ENCODE measurements at regions of chr10 and their contacts with region 1.

Region 1: DNA sequence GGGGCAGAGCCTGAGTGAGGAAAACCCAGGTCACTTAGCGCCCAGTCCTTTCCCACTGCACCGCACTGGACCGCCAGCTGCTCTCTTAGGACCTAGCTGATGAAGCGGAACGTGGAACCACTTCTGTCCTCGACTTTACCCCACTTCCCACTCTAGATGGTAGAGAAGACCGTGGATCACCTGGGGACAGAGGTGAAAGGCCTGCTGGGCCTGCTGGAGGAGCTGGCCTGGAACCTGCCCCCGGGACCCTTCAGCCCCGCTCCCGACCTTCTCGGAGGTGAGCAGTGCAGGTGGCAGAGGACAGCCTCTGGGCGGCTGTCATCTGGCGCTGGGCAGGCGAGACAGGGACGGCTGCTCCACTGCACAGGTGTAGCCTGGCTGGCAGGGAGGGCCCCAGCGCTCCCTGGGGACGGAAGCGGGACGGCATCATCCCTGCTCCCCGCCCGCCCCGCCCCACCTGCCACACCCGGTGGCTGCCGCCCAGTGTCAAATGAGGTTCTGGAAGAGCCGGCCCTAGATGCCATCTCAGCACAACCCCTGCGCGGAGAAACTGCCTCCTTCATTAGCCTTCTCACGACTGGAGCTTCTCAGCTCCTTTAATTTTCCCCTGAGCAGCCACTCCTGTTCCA is 11.7 kb downstream of the PLAC9 start:
- DNase-seq: peak in 2 of 5 donors; percentile 22 to 48
- H3K4me3 ChIP-seq: peak overlapping the region; percentile 30 to 57
- H3K4me3 Mint-ChIP-seq: peak overlapping the region; percentile 81 to 90 (median 84)
- H3K27ac ChIP-seq: peak overlapping the region; percentile 40
- H3K27ac Mint-ChIP-seq: peak overlapping the region; percentile 59 to 97 (median 84)
- H3K4me1 ChIP-seq: peaks cover 17% of the 10 kb centered on the region
- H3K4me1 Mint-ChIP-seq: peaks cover 15 to 24% (median 19%) of the 10 kb centered on the region in 4 donors
- H3K27me3 ChIP-seq: no peaks in the 10 kb centered on the region
- H3K27me3 Mint-ChIP-seq: peaks cover 6 to 9% of the 10 kb centered on the region in 2 donors

Region 2: DNA sequence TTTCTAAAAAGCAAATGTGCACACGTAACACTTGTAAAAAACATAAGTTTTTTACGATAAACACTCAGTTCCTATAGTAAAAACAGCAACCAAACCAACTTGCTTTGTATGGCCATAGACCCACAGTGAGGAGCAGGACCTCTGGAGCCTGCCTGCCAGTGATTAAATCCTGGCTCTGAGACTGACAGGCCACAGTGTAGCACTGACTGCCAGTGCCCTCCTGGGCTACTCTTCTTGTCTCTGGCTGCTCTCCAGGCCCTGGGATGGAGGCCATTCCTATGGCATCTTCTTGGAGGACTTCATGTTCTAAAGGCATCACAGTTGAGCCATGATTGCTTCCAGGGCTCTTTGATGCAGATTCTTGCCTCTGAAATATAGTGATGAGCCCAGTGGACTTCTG is 88.4 kb before region 1 on chr10:
- CTCF ChIA-PET with region 1: interaction called, 8 read pairs
- POLR2A ChIA-PET with region 1: no interaction called
- intact Hi-C with region 1: loop called (anchors 1 kb)
- DNase-seq: no peak
- H3K4me3 ChIP-seq: no peak overlapping the region
- H3K4me3 Mint-ChIP-seq: no peak overlapping the region
- H3K27ac ChIP-seq: no peak overlapping the region
- H3K27ac Mint-ChIP-seq: peak overlapping the region in 1 of 7 donors; percentile 17
- H3K4me1 ChIP-seq: no peaks in the 10 kb centered on the region
- H3K4me1 Mint-ChIP-seq: peaks cover 0 to 10% (median 5%) of the 10 kb centered on the region in 4 donors
- H3K27me3 ChIP-seq: no peaks in the 10 kb centered on the region
- H3K27me3 Mint-ChIP-seq: peaks cover 0 to under 1% of the 10 kb centered on the region in 2 donors

Region 3: DNA sequence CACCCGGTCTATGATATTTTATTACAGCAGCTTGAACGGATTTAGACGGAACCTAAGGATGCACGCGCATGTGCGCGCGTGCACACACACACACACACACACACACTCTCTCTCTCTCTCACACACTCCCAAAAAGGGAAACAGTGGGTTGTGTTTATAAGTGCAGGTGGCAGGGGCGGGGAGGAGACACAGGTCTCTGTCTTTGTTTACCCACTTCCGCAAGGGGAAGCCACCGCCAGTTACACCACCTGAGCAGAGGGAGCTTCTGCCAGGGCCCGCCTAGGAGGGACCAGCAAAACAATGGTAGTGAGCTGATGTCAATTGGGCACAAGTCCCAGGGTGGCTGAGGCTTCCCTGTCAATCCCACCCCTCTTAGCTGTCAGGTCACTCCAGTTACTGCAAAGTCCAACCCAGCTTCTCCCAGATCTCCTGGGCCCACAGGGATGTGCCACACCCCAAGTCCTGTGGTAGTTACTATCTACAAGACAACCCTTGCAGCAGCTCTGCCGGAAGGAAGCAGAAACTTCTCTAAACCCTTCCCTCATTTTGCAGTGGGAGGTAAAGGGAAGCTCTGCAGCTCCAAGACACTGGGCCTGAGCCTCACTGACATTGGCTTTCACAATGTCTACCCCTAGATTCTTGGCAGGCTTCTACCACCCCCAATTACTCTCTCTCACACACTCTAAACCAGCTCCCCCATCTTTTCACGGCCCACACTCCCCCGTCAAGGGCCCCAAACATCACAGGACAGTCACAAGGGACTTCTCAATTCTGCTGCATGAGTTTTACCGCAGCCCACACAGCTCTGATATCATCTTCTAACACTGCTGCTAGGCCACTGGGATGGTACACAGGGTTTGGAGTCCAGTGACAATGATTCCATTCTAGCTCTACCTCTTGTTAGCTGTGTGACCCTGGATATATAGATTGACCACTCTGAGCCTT is 43.6 kb after region 1 on chr10:
- CTCF ChIA-PET with region 1: interaction called, 16 read pairs
- POLR2A ChIA-PET with region 1: interaction called, 42 read pairs
- intact Hi-C with region 1: loop called (anchors 1 kb)
- DNase-seq: peak; percentile 88 to 94 (median 93)
- H3K4me3 ChIP-seq: peak overlapping the region; percentile 18 to 24
- H3K4me3 Mint-ChIP-seq: peak overlapping the region; percentile 78 to 92 (median 82)
- H3K27ac ChIP-seq: peak overlapping the region; percentile 59
- H3K27ac Mint-ChIP-seq: peak overlapping the region; percentile 88 to 97 (median 94)
- H3K4me1 ChIP-seq: peaks cover 91% of the 10 kb centered on the region
- H3K4me1 Mint-ChIP-seq: peaks cover 56 to 90% (median 77%) of the 10 kb centered on the region in 4 donors
- H3K27me3 ChIP-seq: no peaks in the 10 kb centered on the region
- H3K27me3 Mint-ChIP-seq: no peaks in the 10 kb centered on the region

Region 4: DNA sequence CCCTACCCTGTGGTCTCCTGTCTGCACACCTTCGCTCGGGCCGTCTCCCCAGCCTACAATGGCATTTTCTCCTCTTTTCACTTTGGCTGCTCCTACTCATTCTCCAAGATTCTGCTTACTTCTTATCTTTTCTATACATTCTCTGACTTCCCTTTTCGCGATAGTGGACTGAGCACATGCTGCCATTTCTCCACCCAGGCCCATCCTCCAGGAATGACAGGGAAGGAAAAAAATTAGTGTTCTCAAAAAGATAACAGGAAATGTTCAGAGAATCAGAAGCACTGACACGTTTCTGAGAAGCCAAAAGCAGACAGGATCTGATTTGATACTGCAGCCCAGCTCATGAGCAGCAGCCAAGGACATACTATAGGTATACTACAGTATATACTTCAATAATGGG is 67.6 kb after region 1 on chr10:
- CTCF ChIA-PET with region 1: interaction called, 19 read pairs
- POLR2A ChIA-PET with region 1: interaction called, 4 read pairs
- intact Hi-C with region 1: no loop called
- DNase-seq: no peak
- H3K4me3 ChIP-seq: no peak overlapping the region
- H3K4me3 Mint-ChIP-seq: no peak overlapping the region
- H3K27ac ChIP-seq: no peak overlapping the region
- H3K27ac Mint-ChIP-seq: peak overlapping the region in 1 of 7 donors; percentile 7
- H3K4me1 ChIP-seq: peaks cover 7% of the 10 kb centered on the region
- H3K4me1 Mint-ChIP-seq: peaks cover 5 to 13% (median 7%) of the 10 kb centered on the region in 4 donors
- H3K27me3 ChIP-seq: no peaks in the 10 kb centered on the region
- H3K27me3 Mint-ChIP-seq: peaks cover 0 to 1% of the 10 kb centered on the region in 2 donors

Region 5: GRCh38 chr10:80730522-80730921 is 586.3 kb after region 1 on chr10:
- CTCF ChIA-PET with region 1: no interaction called
- POLR2A ChIA-PET with region 1: no interaction called
- intact Hi-C with region 1: no loop called
- DNase-seq: no peak
- H3K4me3 ChIP-seq: no peak overlapping the region
- H3K4me3 Mint-ChIP-seq: no peak overlapping the region
- H3K27ac ChIP-seq: no peak overlapping the region
- H3K27ac Mint-ChIP-seq: no peak overlapping the region
- H3K4me1 ChIP-seq: no peaks in the 10 kb centered on the region
- H3K4me1 Mint-ChIP-seq: no peaks in the 10 kb centered on the region
- H3K27me3 ChIP-seq: no peaks in the 10 kb centered on the region
- H3K27me3 Mint-ChIP-seq: peaks cover 11 to 18% of the 10 kb centered on the region in 2 donors